Endothelial cell of umbilical vein (primary cell): ENCODE measurements at regions of chr5 and their contacts with region 1.

Region 1: GRCh38 chr5:111757355-111758283 is 625 bp upstream of the NREP start:
- DNase-seq: peak; percentile 91
- H3K4me3 ChIP-seq: peak overlapping the region; percentile 53 to 100 (median 80)
- H3K27ac ChIP-seq: peak overlapping the region; percentile 97
- H3K4me1 ChIP-seq: peaks cover 29% of the 10 kb centered on the region
- H3K27me3 ChIP-seq: no peaks in the 10 kb centered on the region
- CTCF ChIP-seq: peak; percentile 24 to 54
- POLR2A ChIP-seq: no peak

Region 2: GRCh38 chr5:110738812-110739651 is 1018.6 kb before region 1 on chr5 and contains the start of gene SLC25A46:
- CTCF ChIA-PET with region 1: no interaction called
- POLR2A ChIA-PET with region 1: no interaction called
- dilution Hi-C with region 1: no loop called
- intact Hi-C with region 1: loop called (anchors 10 kb)
- DNase-seq: peak; percentile 90
- H3K4me3 ChIP-seq: peak within 1 kb of the TSS; percentile 6 to 76 (median 69)
- H3K27ac ChIP-seq: peak within 1 kb of the TSS; percentile 77
- H3K4me1 ChIP-seq: peaks cover 10% of the 10 kb centered on the region
- H3K27me3 ChIP-seq: peaks cover 1 to 11% of the 10 kb centered on the region in 2 experiments
- CTCF ChIP-seq: no peak
- POLR2A ChIP-seq: peak; percentile 63
- total RNA-seq, gene SLC25A46: 30.0 and 31.1 TPM in 2 replicates

Region 3: GRCh38 chr5:111563031-111563822 is 194.4 kb before region 1 on chr5:
- CTCF ChIA-PET with region 1: interaction called, 20 read pairs
- POLR2A ChIA-PET with region 1: interaction called, 13 read pairs
- dilution Hi-C with region 1: no loop called
- intact Hi-C with region 1: loop called (anchors 1 kb)
- DNase-seq: peak; percentile 100
- H3K4me3 ChIP-seq: peak overlapping the region in 1 of 3 experiments; percentile 0
- H3K27ac ChIP-seq: peak overlapping the region; percentile 99
- H3K4me1 ChIP-seq: peaks cover 50% of the 10 kb centered on the region
- H3K27me3 ChIP-seq: no peaks in the 10 kb centered on the region
- CTCF ChIP-seq: no peak
- POLR2A ChIP-seq: peak; percentile 89

Region 4: DNA sequence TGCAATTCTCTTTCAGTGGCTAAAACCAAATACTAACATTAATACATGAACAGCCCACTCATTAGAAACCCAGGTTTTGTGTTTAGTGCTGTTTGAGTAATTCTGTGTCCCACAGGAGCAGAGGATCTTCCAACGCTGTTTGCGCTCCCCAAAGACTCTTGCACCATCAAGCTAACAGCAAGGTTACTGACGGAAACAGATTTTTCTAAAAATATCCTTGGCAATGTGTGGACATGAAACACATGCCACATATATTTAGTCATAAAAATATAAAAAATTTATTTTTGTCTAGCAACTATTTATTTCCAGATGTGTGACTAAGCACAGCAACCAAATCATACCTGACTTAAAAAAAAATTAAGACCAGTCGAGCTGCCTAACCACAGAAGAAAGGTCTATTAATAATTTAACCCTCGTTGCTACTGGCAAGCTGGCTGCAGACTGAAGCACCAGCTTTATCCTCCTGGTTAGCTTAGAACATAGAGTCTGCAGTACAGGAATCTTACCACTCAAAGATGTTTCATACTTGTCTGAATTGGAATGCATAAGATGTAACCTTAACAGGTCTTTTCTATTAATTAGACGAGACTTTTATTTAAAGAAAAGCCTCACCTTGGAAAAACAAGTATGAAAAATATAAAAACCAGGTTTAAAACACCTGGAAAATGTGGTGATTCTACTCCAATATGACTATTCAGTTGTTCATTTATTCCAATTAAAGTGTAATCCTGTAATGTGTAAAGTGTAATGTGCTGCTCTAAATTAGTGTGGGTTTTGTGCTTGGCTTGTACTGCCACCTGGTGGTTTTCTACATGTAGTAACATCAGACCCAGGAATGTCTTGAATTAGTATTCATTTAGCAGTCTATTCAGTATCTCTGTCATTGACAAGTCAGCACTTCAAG is 389.0 kb after region 1 on chr5:
- CTCF ChIA-PET with region 1: interaction called, 10 read pairs
- POLR2A ChIA-PET with region 1: no interaction called
- dilution Hi-C with region 1: no loop called
- intact Hi-C with region 1: loop called (anchors 1 kb)
- DNase-seq: peak; percentile 81
- H3K4me3 ChIP-seq: no peak overlapping the region
- H3K27ac ChIP-seq: no peak overlapping the region
- H3K4me1 ChIP-seq: peaks cover 13% of the 10 kb centered on the region
- H3K27me3 ChIP-seq: no peaks in the 10 kb centered on the region
- CTCF ChIP-seq: peak; percentile 45 to 49
- POLR2A ChIP-seq: no peak

Region 5: DNA sequence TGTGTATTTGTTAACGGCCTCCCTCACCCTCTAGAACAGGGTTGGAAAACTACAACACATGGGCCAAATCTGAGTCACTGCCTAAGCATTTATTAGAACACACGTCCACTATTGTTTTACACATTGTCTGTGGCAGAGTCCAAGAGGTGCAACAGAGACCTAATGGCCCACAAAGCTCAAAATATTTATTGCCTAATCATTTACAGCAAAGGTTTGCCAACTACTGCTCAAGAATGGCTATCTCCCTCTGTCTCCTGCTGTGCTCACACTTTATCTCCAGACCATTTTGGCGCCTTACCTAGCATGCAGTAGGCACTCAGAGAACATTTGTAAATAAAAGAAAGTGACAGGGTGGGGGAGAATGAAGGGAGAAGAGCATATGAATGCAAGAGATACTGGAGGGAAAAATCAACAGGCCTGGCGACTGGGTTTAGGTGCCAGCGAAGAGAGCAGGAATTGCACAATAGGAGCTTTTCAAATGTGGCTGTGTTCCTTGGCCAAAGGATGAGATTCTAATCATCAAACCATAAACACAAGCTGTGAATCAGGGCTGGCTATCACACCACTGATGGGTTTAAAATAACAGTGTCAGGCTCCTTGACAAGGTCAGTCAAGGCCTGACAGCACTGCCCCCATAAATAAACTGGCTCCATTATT is 581.2 kb after region 1 on chr5:
- CTCF ChIA-PET with region 1: no interaction called
- POLR2A ChIA-PET with region 1: no interaction called
- dilution Hi-C with region 1: no loop called
- intact Hi-C with region 1: loop called (anchors 5 kb)
- DNase-seq: peak; percentile 91
- H3K4me3 ChIP-seq: no peak overlapping the region
- H3K27ac ChIP-seq: peak overlapping the region; percentile 90
- H3K4me1 ChIP-seq: peaks cover 22% of the 10 kb centered on the region
- H3K27me3 ChIP-seq: no peaks in the 10 kb centered on the region
- CTCF ChIP-seq: no peak
- POLR2A ChIP-seq: no peak